GM12878 (cell line): ENCODE measurements at regions of chr2 and their contacts with region 1.

Region 1: GRCh38 chr2:45833968-45834344 is 182.5 kb downstream of the PRKCE start:
- DNase-seq: peak; percentile 77
- ATAC-seq: peak; percentile 85
- H3K4me3 ChIP-seq: peak overlapping the region; percentile 39; the same call in 1 of the 2 replicates
- H3K27ac ChIP-seq: peak overlapping the region; percentile 70
- H3K4me1 ChIP-seq: peaks cover 54% of the 10 kb centered on the region
- H3K27me3 ChIP-seq: no peaks in the 10 kb centered on the region
- CTCF ChIP-seq: peak in 2 of 3 experiments; percentile 3 to 15; a peak in 1 of 6 replicates
- EP300 ChIP-seq: no peak
- POLR2A ChIP-seq: peak; percentile 56
- RAD21 ChIP-seq: peak; percentile 29; the same call in 1 of the 2 replicates

Region 2: GRCh38 chr2:45494269-45494977 is 339.5 kb before region 1 on chr2:
- CTCF ChIA-PET with region 1: no interaction called
- POLR2A ChIA-PET with region 1: no interaction called
- RAD21 ChIA-PET with region 1: no interaction called
- SMC1A ChIA-PET with region 1: no interaction called
- in situ Hi-C with region 1: no loop called
- intact Hi-C with region 1: no loop called
- DNase-seq: peak; percentile 21
- ATAC-seq: peak; percentile 63
- H3K4me3 ChIP-seq: no peak overlapping the region
- H3K27ac ChIP-seq: no peak overlapping the region
- H3K4me1 ChIP-seq: peaks cover 14% of the 10 kb centered on the region; the same call in 1 of the 2 replicates
- H3K27me3 ChIP-seq: no peaks in the 10 kb centered on the region
- CTCF ChIP-seq: peak; percentile 64 to 75 (median 74)
- EP300 ChIP-seq: no peak
- POLR2A ChIP-seq: no peak
- RAD21 ChIP-seq: peak; percentile 88

Region 3: DNA sequence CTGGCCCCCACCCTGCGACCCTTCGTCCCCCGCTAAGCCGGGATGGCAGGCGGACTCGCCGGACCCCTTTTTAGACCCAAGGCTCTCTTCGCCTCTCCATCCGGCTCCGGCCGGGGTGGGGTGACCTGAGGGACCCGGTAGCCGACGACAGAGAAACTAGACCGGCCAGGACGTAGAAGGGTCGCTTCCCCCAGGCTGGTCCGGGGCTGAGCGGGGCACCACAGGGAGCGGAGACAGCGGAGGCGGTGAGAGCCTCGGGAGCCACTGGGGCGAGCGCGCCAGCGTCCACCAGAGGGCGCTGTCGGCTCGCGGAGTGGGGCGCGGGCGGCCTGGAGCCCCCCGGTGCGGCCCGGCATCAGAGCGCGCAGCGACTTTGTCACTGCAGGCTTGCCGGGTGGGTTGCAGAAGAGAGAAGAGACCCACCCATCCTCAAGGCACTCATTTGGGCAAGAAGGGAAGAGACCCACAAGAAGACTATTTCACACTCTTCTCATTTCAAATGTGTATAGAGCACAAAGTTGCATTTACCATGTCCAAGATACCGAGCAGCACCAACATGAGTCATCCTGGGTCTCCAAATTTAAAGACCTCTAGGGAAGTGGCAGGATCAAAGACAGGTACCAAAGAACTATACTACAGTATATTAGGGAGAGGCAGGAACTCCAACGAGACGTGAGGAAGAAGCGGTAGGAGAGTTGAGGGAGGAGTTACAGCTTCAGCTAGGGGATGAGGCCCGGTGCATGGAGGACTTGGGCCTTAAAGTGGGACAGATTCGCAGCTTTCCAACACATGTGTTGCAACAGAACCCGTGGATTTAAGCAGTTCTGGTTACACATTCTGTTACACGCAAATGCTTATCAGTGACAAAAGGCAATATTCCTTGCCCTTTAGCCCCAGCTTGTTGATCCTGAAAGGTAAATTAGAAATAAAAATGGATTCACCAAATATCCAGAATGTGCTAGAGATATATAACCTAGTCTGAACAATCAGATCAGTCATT is 190.1 kb before region 1 on chr2:
- CTCF ChIA-PET with region 1: interaction called, 22 read pairs
- POLR2A ChIA-PET with region 1: interaction called, 3 read pairs
- RAD21 ChIA-PET with region 1: interaction called, 60 read pairs
- SMC1A ChIA-PET with region 1: interaction called, 17 read pairs
- in situ Hi-C with region 1: no loop called
- intact Hi-C with region 1: loop called (anchors 2 kb)
- DNase-seq: no peak
- ATAC-seq: peak; percentile 99
- H3K4me3 ChIP-seq: peak overlapping the region; percentile 69; the same call in 1 of the 2 replicates
- H3K27ac ChIP-seq: no peak overlapping the region
- H3K4me1 ChIP-seq: no peaks in the 10 kb centered on the region
- H3K27me3 ChIP-seq: no peaks in the 10 kb centered on the region; a peak in 1 of 4 replicates
- CTCF ChIP-seq: peak; percentile 80 to 84 (median 81)
- EP300 ChIP-seq: no peak
- POLR2A ChIP-seq: no peak
- RAD21 ChIP-seq: peak; percentile 93

Region 4: DNA sequence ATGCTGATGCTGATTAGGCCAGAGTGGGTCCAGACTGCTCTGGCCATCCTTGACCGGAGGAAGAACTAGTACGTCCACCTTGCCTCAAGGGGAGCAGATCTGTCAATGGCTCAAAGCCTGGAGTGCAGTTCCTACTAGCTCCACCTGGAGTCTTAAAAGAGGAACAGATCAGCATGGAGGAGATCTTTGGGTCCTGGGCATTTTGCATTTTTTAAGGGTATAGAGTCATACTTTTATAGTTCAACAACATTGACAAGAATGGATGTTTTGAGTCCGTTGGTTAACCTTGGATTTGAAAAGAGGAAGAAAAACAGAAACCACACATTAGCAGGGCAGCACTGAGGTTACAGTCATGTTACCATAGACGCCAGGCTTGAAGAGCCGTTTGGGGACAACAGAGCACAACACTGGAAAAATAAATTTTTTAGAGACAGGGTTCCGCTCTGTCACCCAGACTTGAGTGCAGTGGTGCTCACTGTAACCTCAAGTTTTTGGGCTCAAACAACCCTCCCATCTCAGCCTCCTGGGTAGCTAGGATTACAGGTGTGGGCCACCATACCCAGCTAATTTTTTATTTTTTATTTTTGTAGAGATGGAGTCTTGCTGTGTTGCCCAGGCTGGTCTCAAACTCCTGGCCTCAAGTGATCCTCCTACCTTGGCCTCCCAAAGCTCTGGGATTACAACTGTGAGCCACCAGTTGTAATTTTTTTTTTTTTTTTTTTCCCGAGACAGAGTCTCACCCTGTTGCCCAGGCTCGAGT is 104.0 kb before region 1 on chr2:
- CTCF ChIA-PET with region 1: interaction called, 11 read pairs
- POLR2A ChIA-PET with region 1: interaction called, 12 read pairs
- RAD21 ChIA-PET with region 1: interaction called, 29 read pairs
- SMC1A ChIA-PET with region 1: interaction called, 57 read pairs
- in situ Hi-C with region 1: no loop called
- intact Hi-C with region 1: loop called (anchors 2 kb)
- DNase-seq: peak; percentile 88
- ATAC-seq: peak; percentile 79
- H3K4me3 ChIP-seq: no peak overlapping the region
- H3K27ac ChIP-seq: peak overlapping the region; percentile 72
- H3K4me1 ChIP-seq: peaks cover 44% of the 10 kb centered on the region
- H3K27me3 ChIP-seq: no peaks in the 10 kb centered on the region
- CTCF ChIP-seq: peak; percentile 43 to 70 (median 55)
- EP300 ChIP-seq: peak; percentile 93
- POLR2A ChIP-seq: no peak; the same call in 1 of the 2 replicates
- RAD21 ChIP-seq: peak; percentile 54

Region 5: DNA sequence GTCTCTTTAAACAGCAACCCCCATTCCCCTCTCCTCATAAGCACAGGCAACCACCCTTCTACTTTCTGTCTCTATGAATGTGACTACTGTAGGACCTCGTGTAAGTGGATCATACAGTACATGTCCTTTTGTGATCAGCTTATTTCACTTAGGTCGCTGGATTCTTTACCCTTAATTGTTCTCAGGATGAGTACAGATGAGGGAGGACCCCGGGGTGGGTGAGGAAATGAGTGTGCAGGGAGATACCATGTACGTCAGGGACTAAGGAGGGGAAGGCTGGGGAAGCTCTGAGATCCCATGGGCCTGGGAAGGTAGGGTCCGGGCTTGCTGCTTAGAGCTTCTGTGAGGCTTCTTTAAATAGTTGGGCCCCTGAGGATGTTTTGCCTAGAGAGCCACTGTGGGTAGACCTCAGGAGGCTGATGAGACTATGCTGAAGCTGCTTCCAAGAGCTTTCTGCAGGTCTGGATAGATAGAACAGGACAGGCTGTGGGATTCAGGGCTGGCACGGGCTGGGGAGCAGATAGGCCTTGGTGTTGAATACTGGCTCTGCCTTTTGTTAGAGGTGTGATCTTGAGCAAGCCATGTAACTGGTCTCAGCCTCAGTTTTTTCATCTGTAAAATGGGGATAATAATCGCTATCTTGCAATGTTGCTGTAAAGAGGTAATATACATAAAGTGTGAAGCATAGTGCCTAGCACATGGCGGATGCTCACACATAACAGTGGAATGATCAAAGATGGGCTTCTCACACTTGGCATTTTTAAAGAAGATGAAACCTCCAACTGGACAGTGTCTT is 27.2 kb before region 1 on chr2:
- CTCF ChIA-PET with region 1: interaction called, 3 read pairs
- POLR2A ChIA-PET with region 1: no interaction called
- RAD21 ChIA-PET with region 1: interaction called, 3 read pairs
- SMC1A ChIA-PET with region 1: interaction called, 12 read pairs
- in situ Hi-C with region 1: no loop called
- intact Hi-C with region 1: no loop called
- DNase-seq: peak; percentile 26
- ATAC-seq: peak; percentile 90
- H3K4me3 ChIP-seq: no peak overlapping the region
- H3K27ac ChIP-seq: peak overlapping the region; percentile 9; the same call in 1 of the 2 replicates
- H3K4me1 ChIP-seq: no peaks in the 10 kb centered on the region
- H3K27me3 ChIP-seq: no peaks in the 10 kb centered on the region
- CTCF ChIP-seq: no peak
- EP300 ChIP-seq: peak in 1 of 2 experiments; percentile 61; a peak in 1 of 4 replicates
- POLR2A ChIP-seq: no peak
- RAD21 ChIP-seq: peak; percentile 7; the same call in 1 of the 2 replicates

Region 6: DNA sequence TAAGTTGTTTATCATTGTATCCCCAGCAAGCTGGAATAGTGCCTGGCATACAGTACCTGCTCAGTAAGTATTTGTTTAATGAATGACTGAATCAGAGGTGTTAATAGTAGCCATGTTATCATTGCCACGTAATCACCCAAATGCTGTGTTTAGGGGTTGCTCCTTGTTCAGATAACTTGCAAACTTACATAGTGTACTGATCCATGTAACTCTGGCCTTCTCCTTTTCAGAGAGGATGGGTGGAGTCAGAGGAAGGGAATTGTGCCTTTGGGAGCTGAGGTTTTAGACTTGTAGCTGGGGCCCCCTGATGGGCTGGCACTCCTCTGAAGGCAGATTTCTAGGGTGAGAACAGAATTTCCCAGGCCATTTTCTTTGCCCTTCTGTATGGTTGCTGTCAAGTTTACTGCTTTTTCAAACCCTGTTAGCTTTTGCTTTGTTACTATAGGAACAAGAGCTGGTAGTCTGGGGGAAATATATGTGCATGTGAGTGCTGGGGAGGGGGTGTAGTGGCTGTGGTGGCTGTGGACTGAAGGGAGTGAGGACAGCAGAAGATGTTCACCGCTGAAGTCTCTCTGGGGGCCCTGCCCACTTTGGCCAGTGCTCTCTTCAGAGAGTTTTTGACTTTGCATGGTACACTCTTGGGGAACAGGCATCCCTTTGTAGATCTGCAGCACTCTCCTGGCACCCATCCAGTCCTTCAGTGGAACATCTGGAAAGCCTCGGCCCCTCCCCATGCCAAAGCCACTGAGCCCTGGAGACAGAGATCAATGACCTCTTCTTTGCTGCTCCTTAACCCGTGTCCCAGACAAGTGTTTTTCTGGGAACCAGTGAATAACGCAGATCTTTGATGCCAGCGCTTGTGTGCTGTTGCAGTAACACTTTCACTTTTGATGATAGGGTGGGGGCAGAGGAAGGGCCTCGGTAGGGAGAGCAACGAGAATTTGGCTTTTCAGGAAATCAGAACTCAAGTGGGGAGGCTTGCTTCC is 26.5 kb after region 1 on chr2:
- CTCF ChIA-PET with region 1: interaction called, 18 read pairs
- POLR2A ChIA-PET with region 1: interaction called, 8 read pairs
- RAD21 ChIA-PET with region 1: interaction called, 111 read pairs
- SMC1A ChIA-PET with region 1: interaction called, 246 read pairs
- in situ Hi-C with region 1: no loop called
- intact Hi-C with region 1: no loop called
- DNase-seq: no peak
- ATAC-seq: peak; percentile 81
- H3K4me3 ChIP-seq: peak overlapping the region; percentile 60
- H3K27ac ChIP-seq: peak overlapping the region; percentile 76
- H3K4me1 ChIP-seq: peaks cover 28% of the 10 kb centered on the region
- H3K27me3 ChIP-seq: no peaks in the 10 kb centered on the region
- CTCF ChIP-seq: no peak; a peak in 1 of 6 replicates
- EP300 ChIP-seq: peak in 1 of 2 experiments; percentile 21; a peak in 1 of 4 replicates
- POLR2A ChIP-seq: no peak
- RAD21 ChIP-seq: 0 out of 2 replicates have a peak, but pooled peaks have one; percentile 6

Region 7: DNA sequence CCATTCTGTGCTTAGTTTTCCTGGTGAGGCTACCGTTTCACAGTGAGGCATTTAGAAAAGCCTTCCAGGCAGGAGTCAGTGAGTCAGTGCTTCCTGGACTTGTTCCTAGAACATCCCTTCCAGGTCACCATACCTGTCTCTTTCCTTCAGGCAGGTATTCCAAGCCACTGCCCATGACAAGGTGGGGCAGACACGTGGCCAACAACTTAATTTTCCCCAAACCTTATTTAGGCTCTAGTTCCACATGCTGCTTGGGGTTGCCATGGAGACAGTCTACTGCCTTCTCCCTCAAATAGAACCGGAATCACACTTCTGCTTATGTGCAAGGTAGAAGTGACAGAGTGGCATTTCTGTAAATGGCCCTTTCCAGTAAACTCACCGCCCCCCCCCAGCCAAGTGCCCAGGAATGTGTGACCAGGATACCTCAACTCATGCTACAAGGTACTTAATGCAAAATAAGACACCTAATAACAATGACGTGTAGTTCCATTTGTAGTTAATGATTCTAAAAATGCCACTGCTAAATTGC is 75.8 kb after region 1 on chr2:
- CTCF ChIA-PET with region 1: interaction called, 10 read pairs
- POLR2A ChIA-PET with region 1: interaction called, 5 read pairs
- RAD21 ChIA-PET with region 1: interaction called, 6 read pairs
- SMC1A ChIA-PET with region 1: interaction called, 24 read pairs
- in situ Hi-C with region 1: no loop called
- intact Hi-C with region 1: no loop called
- DNase-seq: no peak
- ATAC-seq: peak; percentile 90
- H3K4me3 ChIP-seq: peak overlapping the region; percentile 13; the same call in 1 of the 2 replicates
- H3K27ac ChIP-seq: peak overlapping the region; percentile 66
- H3K4me1 ChIP-seq: peaks cover 35% of the 10 kb centered on the region
- H3K27me3 ChIP-seq: no peaks in the 10 kb centered on the region
- CTCF ChIP-seq: no peak
- EP300 ChIP-seq: peak; percentile 31 to 38; a peak in 2 of 4 replicates
- POLR2A ChIP-seq: no peak
- RAD21 ChIP-seq: 0 out of 2 replicates have a peak, but pooled peaks have one; percentile 18